Activated T-helper 2 cell treated with anti-CD3 and anti-CD28 coated beads, Interferon-gamma antibody, Interleukin-2, Interleukin-4, amounts not matched to agents 10 μg/mL and 5 μg/mL and 100 μg/mL, durations not matched to agents 14 hours and 24 hours and 36 hours (primary cell): ENCODE measurements at regions of chr2 and their contacts with region 1.

Region 1: DNA sequence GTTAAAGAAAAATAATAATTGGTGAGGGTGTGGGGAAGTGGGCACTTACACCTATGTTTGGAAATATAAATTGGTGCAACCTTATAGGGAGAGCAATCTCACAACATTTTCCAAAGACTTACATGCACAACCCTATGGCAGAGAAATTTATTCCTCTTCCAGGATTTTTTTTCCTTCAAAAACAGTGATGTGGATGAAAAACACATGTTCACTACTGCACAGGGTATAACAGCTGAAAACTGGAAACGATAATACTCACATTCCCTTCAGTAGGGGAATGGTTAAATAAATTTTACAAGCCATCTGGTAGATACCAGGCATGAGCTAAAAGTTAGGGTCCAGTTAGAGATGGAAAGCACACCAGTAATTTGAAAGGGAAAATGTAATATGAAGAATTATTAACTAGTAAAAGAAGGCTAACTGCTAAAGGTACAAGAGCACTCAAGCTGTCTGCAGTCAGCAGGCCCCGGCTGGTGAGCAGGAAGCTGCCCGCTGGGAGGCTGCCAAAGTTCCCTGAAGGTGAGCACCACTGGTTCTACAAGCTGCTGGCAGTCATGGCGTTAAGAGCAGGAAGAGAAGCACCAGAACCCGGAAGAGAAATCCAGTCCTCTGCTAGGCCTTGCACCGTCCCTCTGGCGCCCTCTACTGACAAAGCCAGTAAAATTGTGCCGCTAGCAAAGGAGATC is 28.4 kb upstream of the CASP8 start:
- DNase-seq: peak; percentile 88
- H3K4me3 Mint-ChIP-seq: peak overlapping the region; percentile 54
- H3K27ac Mint-ChIP-seq: peak overlapping the region; percentile 88
- H3K4me1 Mint-ChIP-seq: peaks cover 43% of the 10 kb centered on the region
- H3K27me3 Mint-ChIP-seq: no peaks in the 10 kb centered on the region

Region 2: DNA sequence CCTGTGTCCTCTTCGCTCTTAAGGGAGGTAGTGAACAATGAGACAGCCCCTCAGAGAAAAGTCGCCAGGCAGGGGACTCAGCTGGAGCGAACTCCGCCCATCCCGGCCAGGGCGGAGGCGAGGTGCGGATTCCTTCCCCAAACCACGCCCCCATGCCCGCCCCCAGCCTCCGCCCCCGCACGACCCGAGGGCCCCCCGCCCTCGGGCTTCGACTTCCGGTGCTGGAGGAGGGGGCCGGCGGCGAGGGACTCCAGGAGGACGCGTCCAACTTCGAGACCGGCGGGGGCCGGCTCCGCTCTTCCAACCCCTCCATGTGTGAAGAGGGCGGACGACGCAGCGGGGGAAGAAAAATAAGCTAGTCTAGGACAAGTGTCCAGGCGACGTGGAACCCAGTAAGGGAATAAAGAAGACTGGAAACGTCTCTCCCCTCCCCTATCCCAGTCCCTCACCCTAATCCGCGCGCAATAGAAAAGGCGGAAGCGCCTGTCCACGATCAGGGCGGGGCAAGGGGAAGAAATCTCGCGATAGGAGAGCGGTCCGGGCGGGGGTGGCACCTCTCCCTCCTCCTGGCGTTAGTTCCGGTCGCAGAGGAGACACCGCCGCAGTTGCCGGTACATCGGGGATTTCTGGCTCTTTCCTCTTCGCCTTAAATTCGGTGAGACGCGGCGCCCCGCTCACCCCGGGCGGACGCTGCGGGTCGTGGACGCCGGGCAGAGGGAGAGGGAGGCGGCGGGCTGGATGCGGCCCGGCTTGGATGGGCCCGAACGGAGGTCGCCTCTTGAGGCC is 420.4 kb before region 1 on chr2 and contains the start of gene BZW1:
- intact Hi-C with region 1: loop called (anchors 1 kb)
- DNase-seq: peak; percentile 94
- H3K4me3 Mint-ChIP-seq: peak within 1 kb of the TSS; percentile 97
- H3K27ac Mint-ChIP-seq: peak within 1 kb of the TSS; percentile 96
- H3K4me1 Mint-ChIP-seq: peaks cover 40% of the 10 kb centered on the region
- H3K27me3 Mint-ChIP-seq: no peaks in the 10 kb centered on the region
- total RNA-seq, gene BZW1: 548 and 571 TPM in 2 replicates

Region 3: DNA sequence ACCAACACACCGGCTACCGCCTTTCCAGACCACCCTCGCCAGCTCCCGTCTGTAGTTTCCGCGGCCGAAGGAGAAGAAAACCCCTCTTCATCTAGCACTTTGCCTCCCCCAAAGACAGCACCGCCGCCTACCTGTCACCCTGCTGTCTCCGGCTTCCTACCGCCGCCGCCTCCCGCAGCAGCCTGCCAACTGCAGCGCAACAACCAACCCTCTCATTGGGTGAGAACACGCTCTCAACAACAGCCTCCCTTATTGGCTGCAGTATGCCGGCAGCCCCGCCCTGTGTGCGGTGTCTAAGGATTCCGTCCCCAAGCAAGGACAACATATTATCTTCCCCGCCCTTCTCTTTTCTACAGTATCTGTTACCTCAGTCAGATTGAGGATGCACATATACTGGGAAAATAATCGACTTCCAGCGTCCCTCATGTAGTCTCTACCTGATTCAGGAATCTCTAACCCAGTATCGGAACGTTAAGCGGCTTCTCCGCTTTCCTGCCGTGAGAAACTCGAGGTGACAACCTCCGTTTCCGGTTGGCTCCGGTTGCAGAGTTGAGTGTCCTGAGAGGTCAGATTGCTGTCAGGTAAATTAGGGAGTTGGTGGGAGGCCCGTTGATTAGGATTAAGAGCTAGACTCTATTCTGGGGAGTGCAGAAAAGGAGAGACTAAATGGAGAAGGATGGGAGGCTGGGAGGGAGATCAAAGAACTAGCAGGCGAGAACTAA is 160.3 kb before region 1 on chr2 and contains the starts of genes HYCC2 and NDUFB3:
- intact Hi-C with region 1: loop called (anchors 1 kb)
- DNase-seq: peak; percentile 92
- H3K4me3 Mint-ChIP-seq: peak within 1 kb of the TSS; percentile 93
- H3K27ac Mint-ChIP-seq: peak within 1 kb of the TSS; percentile 93
- H3K4me1 Mint-ChIP-seq: peaks cover 37% of the 10 kb centered on the region
- H3K27me3 Mint-ChIP-seq: no peaks in the 10 kb centered on the region
- total RNA-seq, gene HYCC2: 20.1 and 23.8 TPM in 2 replicates
- total RNA-seq, gene NDUFB3: 123 and 125 TPM in 2 replicates

Region 4: GRCh38 chr2:201194097-201194496 is 37.8 kb before region 1 on chr2:
- intact Hi-C with region 1: loop called (anchors 1 kb)
- DNase-seq: no peak
- H3K4me3 Mint-ChIP-seq: peak overlapping the region; percentile 20
- H3K27ac Mint-ChIP-seq: peak overlapping the region; percentile 62
- H3K4me1 Mint-ChIP-seq: peaks cover 42% of the 10 kb centered on the region
- H3K27me3 Mint-ChIP-seq: no peaks in the 10 kb centered on the region

Region 5: GRCh38 chr2:201242571-201243277 is 10.8 kb after region 1 on chr2:
- intact Hi-C with region 1: no loop called
- DNase-seq: no peak
- H3K4me3 Mint-ChIP-seq: no peak overlapping the region
- H3K27ac Mint-ChIP-seq: no peak overlapping the region
- H3K4me1 Mint-ChIP-seq: peaks cover 22% of the 10 kb centered on the region
- H3K27me3 Mint-ChIP-seq: no peaks in the 10 kb centered on the region

Region 6: GRCh38 chr2:201270293-201271001 is 38.5 kb after region 1 on chr2:
- intact Hi-C with region 1: loop called (anchors 5 kb)
- DNase-seq: no peak
- H3K4me3 Mint-ChIP-seq: no peak overlapping the region
- H3K27ac Mint-ChIP-seq: peak overlapping the region; percentile 51
- H3K4me1 Mint-ChIP-seq: peaks cover 55% of the 10 kb centered on the region
- H3K27me3 Mint-ChIP-seq: no peaks in the 10 kb centered on the region

Region 7: DNA sequence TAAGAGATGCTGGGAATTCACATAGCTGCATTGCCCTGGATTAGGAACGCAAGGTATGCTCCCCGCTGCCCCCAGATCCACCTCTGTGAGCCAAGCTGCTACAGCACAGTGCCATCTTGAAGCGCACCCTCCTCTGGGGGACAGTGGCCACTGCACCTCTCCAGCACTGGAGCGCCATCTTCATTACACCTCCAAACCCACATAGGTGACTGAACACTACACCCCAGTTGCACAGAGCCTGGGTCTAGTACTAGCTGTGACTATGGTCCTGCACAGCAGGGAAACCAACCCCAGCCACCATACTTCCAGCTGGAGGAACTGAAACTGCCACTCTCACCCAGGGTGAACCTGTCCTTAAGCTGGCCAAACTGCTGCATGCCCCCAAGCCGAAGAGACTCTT is 326.7 kb after region 1 on chr2:
- intact Hi-C with region 1: no loop called
- DNase-seq: no peak
- H3K4me3 Mint-ChIP-seq: no peak overlapping the region
- H3K27ac Mint-ChIP-seq: no peak overlapping the region
- H3K4me1 Mint-ChIP-seq: no peaks in the 10 kb centered on the region
- H3K27me3 Mint-ChIP-seq: no peaks in the 10 kb centered on the region

Region 8: DNA sequence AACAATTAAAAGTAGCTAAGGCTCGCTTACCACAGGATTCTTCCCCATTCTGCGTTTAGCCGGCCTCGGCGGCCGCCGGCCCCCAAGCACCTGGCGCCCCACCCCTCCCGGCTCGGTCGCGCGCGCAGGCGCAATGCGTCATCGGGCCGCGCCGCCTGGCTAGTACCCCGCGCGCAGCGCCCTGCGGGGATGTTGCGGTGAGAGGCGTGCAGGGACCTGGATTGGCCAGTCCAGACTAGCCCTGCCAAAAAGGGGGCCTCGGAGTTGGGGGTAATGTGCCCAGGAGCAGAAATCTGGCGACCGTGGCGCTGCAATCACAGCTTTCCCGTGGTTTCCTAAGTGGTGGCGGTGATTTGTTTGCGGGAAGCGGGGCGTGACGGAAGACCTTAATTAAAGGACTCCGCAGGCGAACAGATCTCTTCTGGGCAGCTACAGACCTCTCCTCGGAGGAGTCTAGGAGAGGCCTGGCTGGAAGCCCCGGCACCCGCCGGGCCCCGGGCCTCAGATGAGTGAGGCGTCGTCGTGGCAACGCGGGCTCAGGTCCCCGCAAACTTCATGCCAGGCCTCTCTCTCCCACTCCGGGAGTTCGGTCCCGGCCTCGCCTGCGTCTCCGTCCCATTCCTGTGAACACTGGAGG is 410.8 kb after region 1 on chr2:
- intact Hi-C with region 1: loop called (anchors 2 kb)
- DNase-seq: peak; percentile 85
- H3K4me3 Mint-ChIP-seq: peak overlapping the region; percentile 87
- H3K27ac Mint-ChIP-seq: peak overlapping the region; percentile 91
- H3K4me1 Mint-ChIP-seq: peaks cover 15% of the 10 kb centered on the region
- H3K27me3 Mint-ChIP-seq: peaks cover 1% of the 10 kb centered on the region